Endothelial cell of umbilical vein (primary cell): ENCODE measurements at regions of chr20 and their contacts with region 1.

Region 1: GRCh38 chr20:7375905-7376304 is 564.4 kb downstream of the HAO1 start:
- DNase-seq: peak; percentile 34
- H3K4me3 ChIP-seq: no peak overlapping the region
- H3K27ac ChIP-seq: no peak overlapping the region
- H3K4me1 ChIP-seq: no peaks in the 10 kb centered on the region
- H3K27me3 ChIP-seq: no peaks in the 10 kb centered on the region
- CTCF ChIP-seq: peak; percentile 9 to 23
- POLR2A ChIP-seq: no peak

Region 2: DNA sequence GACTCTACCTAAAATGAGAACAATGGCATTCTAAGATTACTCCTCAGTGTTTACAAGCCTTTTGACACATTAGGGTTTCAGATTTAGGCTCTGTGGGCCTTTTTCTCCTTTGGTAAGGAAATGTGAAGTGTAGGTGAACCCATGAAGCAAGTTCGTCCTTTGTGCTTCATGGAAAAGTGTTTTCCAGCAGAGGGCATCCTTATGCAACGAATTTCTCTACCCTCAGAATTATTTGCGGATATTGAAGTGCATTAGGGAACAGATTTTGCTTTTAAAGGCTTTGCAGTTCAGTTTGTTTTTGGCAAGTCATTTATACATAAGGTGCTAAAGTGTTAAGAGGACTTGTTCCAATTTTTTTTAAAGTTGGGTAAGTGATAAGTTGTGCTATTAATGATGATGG is 1197.4 kb before region 1 on chr20:
- CTCF ChIA-PET with region 1: no interaction called
- POLR2A ChIA-PET with region 1: no interaction called
- dilution Hi-C with region 1: no loop called
- intact Hi-C with region 1: loop called (anchors 10 kb)
- DNase-seq: peak; percentile 67
- H3K4me3 ChIP-seq: no peak overlapping the region
- H3K27ac ChIP-seq: no peak overlapping the region
- H3K4me1 ChIP-seq: no peaks in the 10 kb centered on the region
- H3K27me3 ChIP-seq: peaks cover 0 to 2% of the 10 kb centered on the region in 2 experiments
- CTCF ChIP-seq: peak; percentile 29 to 36
- POLR2A ChIP-seq: no peak

Region 3: DNA sequence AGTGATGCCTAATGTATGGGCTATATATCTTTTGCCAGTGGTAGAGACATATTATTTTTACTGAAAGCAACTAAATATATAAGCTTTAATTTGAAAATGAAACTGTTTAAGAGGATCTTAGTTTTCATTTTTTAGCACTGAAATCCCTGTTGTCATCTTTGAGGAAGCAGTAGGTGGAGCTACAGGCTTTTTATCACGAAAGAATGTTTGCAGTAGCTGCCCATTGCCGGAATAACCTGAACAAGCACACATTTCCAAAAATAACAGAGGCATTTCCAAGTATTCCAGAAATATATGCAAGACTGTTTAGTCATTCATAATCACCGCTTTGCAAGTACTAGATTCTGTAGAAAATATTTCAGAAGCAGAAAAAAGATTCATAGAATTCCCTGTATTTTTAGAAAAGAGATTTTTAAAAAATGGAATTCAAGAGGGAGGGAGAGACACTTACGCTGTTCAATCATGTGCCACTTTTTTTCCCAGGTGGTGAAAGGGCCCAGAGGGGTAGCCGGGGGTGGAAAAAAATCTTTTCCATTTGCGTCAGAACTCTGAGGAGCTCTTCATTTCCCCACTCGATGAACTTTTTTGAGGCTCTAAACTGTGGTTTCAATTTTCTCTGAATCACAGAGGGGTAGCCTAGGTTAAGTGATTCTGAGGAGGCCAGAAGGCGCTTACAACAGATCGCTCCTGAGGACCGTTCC is 1110.6 kb before region 1 on chr20:
- CTCF ChIA-PET with region 1: no interaction called
- POLR2A ChIA-PET with region 1: no interaction called
- dilution Hi-C with region 1: no loop called
- intact Hi-C with region 1: loop called (anchors 10 kb)
- DNase-seq: peak; percentile 82
- H3K4me3 ChIP-seq: peak overlapping the region in 1 of 3 experiments; percentile 59
- H3K27ac ChIP-seq: peak overlapping the region; percentile 18
- H3K4me1 ChIP-seq: peaks cover 10% of the 10 kb centered on the region
- H3K27me3 ChIP-seq: peaks cover 0 to 4% of the 10 kb centered on the region in 2 experiments
- CTCF ChIP-seq: peak; percentile 11 to 29
- POLR2A ChIP-seq: no peak

Region 4: GRCh38 chr20:6828794-6829423 is 547.0 kb before region 1 on chr20:
- CTCF ChIA-PET with region 1: no interaction called
- POLR2A ChIA-PET with region 1: no interaction called
- dilution Hi-C with region 1: no loop called
- intact Hi-C with region 1: loop called (anchors 1 kb)
- DNase-seq: peak; percentile 85
- H3K4me3 ChIP-seq: no peak overlapping the region
- H3K27ac ChIP-seq: no peak overlapping the region
- H3K4me1 ChIP-seq: no peaks in the 10 kb centered on the region
- H3K27me3 ChIP-seq: no peaks in the 10 kb centered on the region
- CTCF ChIP-seq: peak; percentile 56 to 59
- POLR2A ChIP-seq: no peak

Region 5: DNA sequence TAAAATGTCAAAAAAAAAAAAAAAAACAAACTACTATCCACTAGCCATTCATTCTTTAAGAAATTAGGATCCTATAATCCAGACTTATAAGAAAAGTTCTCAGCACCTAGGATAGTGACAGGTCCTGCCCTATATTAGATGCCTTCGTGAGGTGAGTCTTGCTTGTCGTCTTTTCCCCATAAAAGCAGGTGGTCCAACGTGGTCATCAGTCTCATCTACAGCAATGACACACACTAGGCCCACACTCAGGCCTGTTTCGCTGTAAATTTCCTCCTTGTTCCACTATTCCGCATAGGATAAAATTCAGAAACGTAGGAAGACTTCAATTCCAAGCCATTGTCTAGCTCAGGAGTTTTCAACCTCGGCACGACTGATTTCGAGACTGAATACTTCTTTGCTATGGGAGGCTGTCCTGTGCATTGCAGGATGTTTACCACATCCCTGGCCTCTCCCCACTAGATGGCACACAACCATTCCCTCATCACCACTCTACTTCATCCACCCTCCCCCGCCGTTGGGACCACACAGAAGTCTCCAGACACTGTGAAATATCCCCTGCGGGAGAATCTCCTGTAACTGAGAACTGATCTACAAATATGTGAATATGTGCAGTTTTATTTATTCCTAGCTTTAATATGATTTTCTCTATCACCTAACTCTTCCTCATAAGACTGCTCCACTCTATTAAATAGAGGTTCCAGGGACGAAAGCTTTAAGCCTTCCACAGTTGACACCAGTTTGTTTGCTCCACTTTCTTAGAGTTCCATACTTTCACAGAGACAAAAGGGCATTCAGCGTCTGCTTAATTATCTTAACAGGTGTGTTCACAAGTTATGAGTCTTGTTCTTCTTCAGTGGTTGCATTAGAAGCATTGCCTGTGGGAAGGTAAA is 262.1 kb before region 1 on chr20:
- CTCF ChIA-PET with region 1: no interaction called
- POLR2A ChIA-PET with region 1: no interaction called
- dilution Hi-C with region 1: no loop called
- intact Hi-C with region 1: loop called (anchors 5 kb)
- DNase-seq: peak; percentile 53
- H3K4me3 ChIP-seq: no peak overlapping the region
- H3K27ac ChIP-seq: no peak overlapping the region
- H3K4me1 ChIP-seq: no peaks in the 10 kb centered on the region
- H3K27me3 ChIP-seq: no peaks in the 10 kb centered on the region
- CTCF ChIP-seq: peak; percentile 53 to 68
- POLR2A ChIP-seq: no peak

Region 6: DNA sequence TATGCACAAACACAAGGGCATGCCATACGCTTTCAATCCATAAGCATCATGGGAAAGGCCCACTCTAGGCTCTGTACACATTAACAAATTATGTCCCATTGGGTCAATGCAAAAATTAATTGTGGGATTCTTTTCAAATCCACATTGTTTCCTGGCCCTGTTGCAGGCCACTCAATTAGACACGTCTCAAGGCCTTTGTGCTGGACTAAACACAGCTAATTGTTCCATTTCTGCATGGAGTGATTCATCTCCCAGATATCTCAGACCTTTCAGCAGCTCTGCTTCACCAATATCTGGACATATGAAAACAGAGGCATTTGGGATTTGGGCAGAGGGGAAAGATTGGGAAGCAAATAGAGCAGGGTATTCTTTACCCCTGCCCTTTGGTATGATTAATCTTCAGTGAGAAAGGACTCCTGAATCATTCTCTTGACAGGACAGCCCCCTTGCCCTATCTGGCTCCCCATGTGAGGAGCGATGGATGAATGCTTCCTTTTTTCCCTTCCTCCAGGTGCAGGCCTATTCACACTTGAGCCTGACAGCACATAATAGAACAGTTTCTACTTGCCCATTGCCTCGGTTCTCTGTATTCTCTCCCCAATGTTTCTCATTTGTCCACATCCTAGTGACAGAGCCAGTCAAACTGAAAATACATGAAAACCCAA is 16.8 kb after region 1 on chr20:
- CTCF ChIA-PET with region 1: interaction called, 10 read pairs
- POLR2A ChIA-PET with region 1: no interaction called
- dilution Hi-C with region 1: no loop called
- intact Hi-C with region 1: no loop called
- DNase-seq: peak; percentile 56
- H3K4me3 ChIP-seq: no peak overlapping the region
- H3K27ac ChIP-seq: no peak overlapping the region
- H3K4me1 ChIP-seq: peaks cover 4% of the 10 kb centered on the region
- H3K27me3 ChIP-seq: no peaks in the 10 kb centered on the region
- CTCF ChIP-seq: no peak
- POLR2A ChIP-seq: no peak